ENCODE measurements at regions of chr22 and their contacts with region 1.

Region 1: GRCh38 chr22:35076630-35077029 is 10.7 kb downstream of the ISX start:
- DNase-seq: no peak
- ATAC-seq: no peak
- H3K4me3 ChIP-seq: no peak overlapping the region
- H3K27ac ChIP-seq: no peak overlapping the region
- H3K4me1 ChIP-seq: no peaks in the 10 kb centered on the region
- H3K27me3 ChIP-seq: no peaks in the 10 kb centered on the region
- CTCF ChIP-seq: no peak
- POLR2A ChIP-seq: no peak
- RAD21 ChIP-seq: no peak

Region 2: DNA sequence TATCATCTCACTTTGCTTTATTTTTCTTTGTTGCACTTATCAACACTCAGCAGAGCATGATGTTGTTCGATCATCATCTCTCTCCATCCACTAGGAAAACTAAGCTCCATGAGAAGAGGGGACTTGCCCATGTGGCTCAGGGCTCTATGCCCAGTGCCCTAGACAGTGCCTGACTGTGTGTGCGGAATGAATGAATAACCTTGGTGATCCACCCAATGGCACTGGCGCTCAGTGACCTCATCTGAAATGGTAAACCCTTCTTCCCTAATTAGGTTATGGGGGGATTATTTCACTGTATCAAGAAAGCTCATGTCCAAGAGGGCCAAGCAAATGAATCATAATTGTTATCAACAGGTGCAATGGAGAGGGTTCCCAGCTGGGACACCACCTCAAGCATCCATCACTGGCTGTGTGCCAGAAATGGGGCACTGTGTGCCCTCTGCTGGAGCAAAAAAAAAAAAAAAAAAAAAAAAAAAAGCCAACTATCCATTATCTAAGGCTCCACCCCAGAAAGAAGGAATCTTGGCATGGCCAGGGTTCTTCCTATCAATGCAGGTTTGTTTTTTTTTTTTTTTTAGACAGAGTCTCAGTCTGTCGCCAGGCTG is 1329.0 kb before region 1 on chr22:
- CTCF ChIA-PET with region 1: no interaction called
- POLR2A ChIA-PET with region 1: no interaction called
- dilution Hi-C with region 1: no loop called
- in situ Hi-C with region 1: no loop called
- intact Hi-C with region 1: loop called (anchors 5 kb)
- DNase-seq: no peak
- ATAC-seq: no peak
- H3K4me3 ChIP-seq: no peak overlapping the region
- H3K27ac ChIP-seq: no peak overlapping the region
- H3K4me1 ChIP-seq: no peaks in the 10 kb centered on the region
- H3K27me3 ChIP-seq: no peaks in the 10 kb centered on the region
- CTCF ChIP-seq: no peak
- POLR2A ChIP-seq: no peak
- RAD21 ChIP-seq: no peak

Measured in IMR-90 (cell line).